Transverse colon (tissue), 4 donors: ENCODE measurements at regions of chr12 and their contacts with region 1.

Region 1: DNA sequence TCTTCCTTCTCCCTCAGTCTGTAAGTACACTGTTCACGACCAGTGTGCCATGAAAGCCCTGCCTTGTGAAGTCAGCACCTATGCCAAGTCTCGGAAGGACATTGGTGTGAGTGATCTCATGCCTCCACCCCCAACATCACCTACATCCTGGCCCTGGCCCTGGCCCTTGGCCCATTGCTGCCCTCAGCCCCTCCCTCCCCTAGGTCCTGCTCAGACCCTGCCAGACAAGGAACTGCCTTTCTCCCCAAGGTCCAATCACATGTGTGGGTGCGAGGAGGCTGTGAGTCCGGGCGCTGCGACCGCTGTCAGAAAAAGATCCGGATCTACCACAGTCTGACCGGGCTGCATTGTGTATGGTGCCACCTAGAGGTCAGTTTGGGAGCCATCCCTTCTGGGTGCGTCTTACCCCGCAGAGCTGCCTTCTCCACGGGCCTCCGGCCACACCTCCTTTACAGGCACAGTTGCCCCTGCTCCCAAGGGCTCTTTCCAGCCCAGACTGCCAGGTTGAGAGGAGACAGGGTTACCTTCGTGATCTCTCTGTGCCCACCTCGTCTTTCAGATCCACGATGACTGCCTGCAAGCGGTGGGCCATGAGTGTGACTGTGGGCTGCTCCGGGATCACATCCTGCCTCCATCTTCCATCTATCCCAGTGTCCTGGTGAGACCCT is 9.2 kb downstream of the DGKA start:
- DNase-seq: peak; percentile 92
- H3K4me3 ChIP-seq: no peak overlapping the region
- H3K27ac ChIP-seq: peak overlapping the region; percentile 58 to 72 (median 60)
- H3K4me1 ChIP-seq: peaks cover 0 to 14% (median 7%) of the 10 kb centered on the region in 4 donors
- H3K27me3 ChIP-seq: no peaks in the 10 kb centered on the region
- CTCF ChIP-seq: peak; percentile 87 to 94 (median 91)
- EP300 ChIP-seq: no peak
- POLR2A ChIP-seq: no peak

Region 2: GRCh38 chr12:55745361-55746146 is 194.6 kb before region 1 on chr12:
- in situ Hi-C with region 1: loop called in 2 of 4 experiments (anchors 5 to 10 kb)
- intact Hi-C with region 1: no loop called
- DNase-seq: no peak
- H3K4me3 ChIP-seq: peak overlapping the region in 1 of 4 donors; percentile 23
- H3K27ac ChIP-seq: peak overlapping the region; percentile 21 to 86 (median 42)
- H3K4me1 ChIP-seq: peaks cover 13 to 33% (median 22%) of the 10 kb centered on the region in 4 donors
- H3K27me3 ChIP-seq: peaks cover 21% of the 10 kb centered on the region
- CTCF ChIP-seq: no peak
- EP300 ChIP-seq: no peak
- POLR2A ChIP-seq: no peak

Region 3: DNA sequence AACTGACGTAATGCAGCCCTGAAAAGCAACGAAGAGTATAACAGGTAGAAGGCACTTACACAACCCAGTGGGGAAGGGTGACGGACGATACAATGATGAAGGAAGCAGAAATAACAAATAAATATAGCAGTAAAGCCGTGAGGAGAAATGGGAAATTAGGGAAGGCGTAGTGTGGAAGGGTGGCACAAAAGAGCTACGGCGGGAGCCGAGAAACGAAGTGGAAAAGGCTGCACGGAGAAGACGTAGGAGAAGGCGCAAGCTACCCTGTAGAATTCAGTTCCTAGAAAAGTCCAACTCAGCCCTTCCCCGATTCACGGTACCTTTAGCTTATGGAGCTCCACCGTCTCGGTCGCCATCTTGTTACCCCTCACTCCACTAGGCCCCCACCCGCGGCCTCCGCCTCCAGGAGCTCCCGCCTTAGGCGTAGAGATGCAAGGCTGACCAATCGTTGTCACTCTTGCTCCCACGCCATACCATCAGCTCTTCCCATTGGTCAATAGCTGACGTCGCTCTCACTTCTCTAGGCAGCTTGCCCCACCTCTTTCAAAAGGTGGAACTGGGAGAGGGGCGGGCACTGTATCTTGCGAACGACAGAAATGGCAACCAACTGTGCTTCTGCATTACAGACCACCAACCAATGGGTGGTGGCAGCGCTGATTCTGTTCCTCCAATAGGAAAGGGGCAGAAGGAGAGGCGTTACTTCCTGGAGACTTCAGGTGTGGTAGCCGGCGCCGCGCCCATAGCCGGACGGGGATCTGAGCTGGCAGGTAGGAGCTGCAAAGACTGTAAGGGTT is 122.7 kb before region 1 on chr12 and contains the starts of genes ORMDL2 and SARNP:
- in situ Hi-C with region 1: loop called (anchors 10 to 25 kb)
- intact Hi-C with region 1: no loop called
- DNase-seq: peak; percentile 98
- H3K4me3 ChIP-seq: peak within 1 kb of the TSS; percentile 74 to 87 (median 86)
- H3K27ac ChIP-seq: peak within 1 kb of the TSS; percentile 91 to 97 (median 93)
- H3K4me1 ChIP-seq: peaks cover 19 to 50% (median 29%) of the 10 kb centered on the region in 4 donors
- H3K27me3 ChIP-seq: no peaks in the 10 kb centered on the region
- CTCF ChIP-seq: no peak
- EP300 ChIP-seq: no peak
- POLR2A ChIP-seq: peak; percentile 87
- total RNA-seq, gene ORMDL2: 3.7 to 40.3 (median 21.7) TPM
- total RNA-seq, gene SARNP: 38.0 to 50.7 (median 45.0) TPM

Region 4: GRCh38 chr12:55885113-55885512 is 55.1 kb before region 1 on chr12:
- in situ Hi-C with region 1: no loop called
- intact Hi-C with region 1: no loop called
- DNase-seq: no peak
- H3K4me3 ChIP-seq: no peak overlapping the region
- H3K27ac ChIP-seq: no peak overlapping the region
- H3K4me1 ChIP-seq: no peaks in the 10 kb centered on the region
- H3K27me3 ChIP-seq: no peaks in the 10 kb centered on the region
- CTCF ChIP-seq: no peak
- EP300 ChIP-seq: no peak
- POLR2A ChIP-seq: no peak

Region 5: DNA sequence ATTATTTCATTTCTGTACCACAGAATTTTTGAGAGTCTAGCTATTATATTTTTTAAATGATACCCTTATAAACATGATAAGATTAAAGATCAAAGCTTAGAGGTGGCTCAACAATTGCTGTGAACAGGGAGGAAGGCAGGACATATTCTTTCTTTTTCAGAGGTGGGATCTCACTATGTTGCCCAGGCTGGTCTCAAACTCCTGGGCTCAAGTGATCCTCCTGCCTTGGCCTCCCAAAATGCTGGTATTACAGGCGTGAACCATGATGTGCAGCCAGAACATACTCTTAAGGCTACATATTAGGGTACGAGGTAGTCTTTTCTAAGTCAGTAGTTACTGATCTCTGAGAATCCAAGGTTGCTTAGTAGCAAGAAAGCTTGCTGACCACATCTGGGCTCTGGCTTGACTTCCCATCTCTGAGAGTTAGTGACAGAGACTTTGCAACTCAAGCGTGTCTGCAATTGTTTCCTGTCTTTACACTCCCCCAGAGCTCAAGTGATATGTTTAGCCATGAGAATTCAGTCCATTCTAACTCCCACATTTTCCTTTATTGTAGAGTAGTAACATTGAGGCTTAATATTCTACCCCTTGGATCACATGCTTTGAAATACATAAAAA is 42.2 kb after region 1 on chr12:
- in situ Hi-C with region 1: no loop called
- intact Hi-C with region 1: no loop called
- DNase-seq: no peak
- H3K4me3 ChIP-seq: no peak overlapping the region
- H3K27ac ChIP-seq: no peak overlapping the region
- H3K4me1 ChIP-seq: peaks cover 0 to 13% (median 6%) of the 10 kb centered on the region in 4 donors
- H3K27me3 ChIP-seq: no peaks in the 10 kb centered on the region
- CTCF ChIP-seq: no peak
- EP300 ChIP-seq: no peak
- POLR2A ChIP-seq: no peak